GM18951 (cell line): ENCODE measurements at regions of chr1 and their contacts with region 1.

Region 1: GRCh38 chr1:79353224-79353623 is 346.7 kb upstream of the ADGRL4 start:
- POLR2A ChIP-seq: no peak

Region 2: DNA sequence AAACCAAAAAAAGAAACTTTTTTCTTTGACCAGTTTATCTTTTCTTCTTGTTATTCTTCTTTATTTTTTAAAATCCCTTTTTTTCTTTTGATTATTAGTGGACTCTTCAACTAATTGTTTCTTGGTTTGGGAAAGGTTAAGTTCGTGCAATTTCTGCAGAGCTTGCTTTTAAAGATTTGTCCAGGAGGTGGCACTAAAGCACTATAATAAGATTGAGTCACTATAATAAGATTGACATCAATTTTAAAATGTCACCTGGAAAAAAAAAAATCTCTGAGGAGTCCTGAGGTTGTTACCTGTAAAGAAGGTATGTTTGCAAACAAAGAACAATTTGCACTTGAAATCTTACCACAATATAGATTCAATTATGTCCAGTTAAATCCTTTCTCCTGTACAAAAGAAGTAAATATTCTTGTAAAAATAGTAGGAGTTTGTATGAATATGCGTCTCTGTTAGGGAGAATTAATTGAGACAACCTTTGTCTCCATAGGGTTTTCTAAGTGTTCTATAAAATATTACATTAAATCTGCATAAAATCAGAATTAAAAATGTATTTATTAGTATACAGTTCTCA is 513.4 kb before region 1 on chr1:
- in situ Hi-C with region 1: loop called (anchors 25 kb)
- POLR2A ChIP-seq: no peak

Region 3: DNA sequence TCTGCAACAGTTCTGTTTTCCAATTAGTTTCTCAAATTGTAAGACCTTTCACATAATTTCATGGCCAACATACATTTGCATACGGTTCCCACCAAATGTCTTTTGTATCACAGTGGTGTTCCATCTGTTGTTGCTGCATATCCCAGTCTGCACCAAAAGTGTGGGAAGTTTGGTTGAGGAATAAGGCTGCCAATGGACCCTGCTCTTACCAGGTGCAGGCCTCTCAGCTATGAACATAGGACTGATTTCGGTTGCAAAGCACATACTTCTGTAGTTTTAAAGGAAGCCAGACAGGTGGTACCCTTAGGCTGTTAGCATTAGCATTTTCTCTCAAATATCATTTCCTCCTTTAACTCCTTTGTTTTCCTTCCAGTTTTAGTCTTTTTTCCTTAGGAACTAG is 380.5 kb before region 1 on chr1:
- in situ Hi-C with region 1: no loop called
- POLR2A ChIP-seq: no peak